GM12878 (cell line): ENCODE measurements at regions of chr2 and their contacts with region 1.

Region 1: GRCh38 chr2:177164584-177165052 is 48.0 kb upstream of the HNRNPA3 start:
- DNase-seq: peak; percentile 56
- ATAC-seq: peak; percentile 64
- H3K4me3 ChIP-seq: peak overlapping the region; percentile 63
- H3K27ac ChIP-seq: peak overlapping the region; percentile 97
- H3K4me1 ChIP-seq: peaks cover 16% of the 10 kb centered on the region
- H3K27me3 ChIP-seq: no peaks in the 10 kb centered on the region
- CTCF ChIP-seq: peak; percentile 100; a peak in 5 of 6 replicates
- EP300 ChIP-seq: no peak; a peak in 1 of 4 replicates
- POLR2A ChIP-seq: no peak
- RAD21 ChIP-seq: peak; percentile 99

Region 2: DNA sequence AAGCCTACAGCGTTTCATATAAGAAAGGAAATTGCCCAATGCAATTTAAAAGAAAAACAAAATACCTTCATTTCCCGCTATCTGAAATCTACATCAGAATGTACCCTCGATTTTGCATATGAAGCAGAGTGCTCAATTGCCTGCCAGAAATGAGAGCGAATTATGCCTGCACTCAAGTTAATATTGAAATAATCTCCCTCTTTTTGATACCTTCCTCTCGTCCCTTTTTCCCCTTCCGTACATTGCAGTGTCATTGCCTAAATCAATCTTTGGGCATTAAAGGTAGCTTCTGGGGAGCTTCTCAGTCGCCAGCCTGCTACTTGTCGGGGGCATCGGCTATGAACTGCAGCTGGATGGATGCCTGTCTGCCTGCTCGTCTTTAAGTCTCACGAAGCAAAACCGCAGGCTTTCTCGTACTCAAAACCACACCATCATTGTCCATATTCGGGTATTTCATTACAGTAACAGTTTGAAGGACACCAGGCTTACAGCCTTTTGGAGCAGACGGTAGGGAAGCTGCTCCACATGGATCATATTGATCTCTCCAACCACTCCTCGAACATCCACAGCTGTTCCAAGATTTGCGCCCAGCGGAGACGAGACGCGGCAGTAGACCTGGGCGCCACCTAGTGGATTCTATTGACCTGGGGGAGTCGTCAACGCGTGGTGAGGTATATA is 16.0 kb before region 1 on chr2:
- CTCF ChIA-PET with region 1: interaction called, 90 read pairs
- POLR2A ChIA-PET with region 1: no interaction called
- RAD21 ChIA-PET with region 1: interaction called, 27 read pairs
- SMC1A ChIA-PET with region 1: interaction called, 54 read pairs
- in situ Hi-C with region 1: no loop called
- intact Hi-C with region 1: no loop called
- DNase-seq: peak; percentile 45
- ATAC-seq: peak; percentile 95
- H3K4me3 ChIP-seq: peak overlapping the region; percentile 69
- H3K27ac ChIP-seq: no peak overlapping the region
- H3K4me1 ChIP-seq: no peaks in the 10 kb centered on the region
- H3K27me3 ChIP-seq: peaks cover 0 to 2% of the 10 kb centered on the region in 2 experiments; a peak in 1 of 4 replicates
- CTCF ChIP-seq: peak; percentile 87 to 93 (median 92)
- EP300 ChIP-seq: 0 out of 4 replicates have a peak, but pooled peaks of 1 of the 2 experiments have one; percentile 13
- POLR2A ChIP-seq: no peak
- RAD21 ChIP-seq: peak; percentile 67

Region 3: DNA sequence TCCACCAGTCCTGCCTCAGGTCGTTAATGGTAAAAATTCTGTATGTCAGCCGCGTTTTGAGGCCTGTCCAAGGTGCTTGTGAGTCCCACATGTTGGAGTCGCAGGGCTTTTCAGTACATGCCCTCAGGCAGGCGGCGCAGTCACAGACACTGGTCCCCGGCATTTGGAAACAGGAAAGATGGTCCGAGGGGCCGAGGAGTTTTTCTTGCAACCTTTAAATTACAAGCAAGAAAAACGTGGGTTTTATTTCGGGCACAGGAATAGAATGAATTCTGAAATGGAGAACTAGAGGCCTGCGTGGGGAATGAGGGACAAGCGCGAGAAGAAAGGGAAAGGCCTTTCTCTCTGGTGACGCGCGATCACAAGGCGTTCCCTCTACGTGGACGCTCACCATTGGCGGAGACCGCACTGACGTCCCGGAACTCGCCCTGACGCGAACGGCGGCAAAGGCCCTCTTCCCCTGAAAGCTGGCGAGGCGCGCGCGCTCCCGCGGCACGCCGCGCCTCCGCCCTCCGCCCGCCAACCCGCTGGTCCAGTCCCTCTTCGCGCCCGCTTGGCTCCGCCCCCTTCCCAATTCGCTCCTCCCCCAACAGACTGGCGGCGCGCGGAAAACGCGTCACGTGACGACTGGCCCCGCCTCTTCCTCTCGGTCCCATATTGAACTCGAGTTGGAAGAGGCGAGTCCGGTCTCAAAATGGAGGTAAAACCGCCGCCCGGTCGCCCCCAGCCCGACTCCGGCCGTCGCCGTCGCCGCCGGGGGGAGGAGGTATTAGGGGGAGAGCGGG is 47.7 kb after region 1 on chr2 and contains the start of gene HNRNPA3:
- CTCF ChIA-PET with region 1: interaction called, 24 read pairs
- POLR2A ChIA-PET with region 1: interaction called, 20 read pairs
- RAD21 ChIA-PET with region 1: interaction called, 31 read pairs
- SMC1A ChIA-PET with region 1: interaction called, 25 read pairs
- in situ Hi-C with region 1: loop called (anchors 5 kb)
- intact Hi-C with region 1: loop called (anchors 1 kb)
- DNase-seq: peak; percentile 95
- ATAC-seq: peak; percentile 88
- H3K4me3 ChIP-seq: peak within 1 kb of the TSS; percentile 95
- H3K27ac ChIP-seq: peak within 1 kb of the TSS; percentile 100
- H3K4me1 ChIP-seq: peaks cover 8% of the 10 kb centered on the region
- H3K27me3 ChIP-seq: no peaks in the 10 kb centered on the region
- CTCF ChIP-seq: peak in 2 of 3 experiments; percentile 16 to 20; a peak in 3 of 6 replicates
- EP300 ChIP-seq: peak in 1 of 2 experiments; percentile 43; a peak in 1 of 4 replicates
- POLR2A ChIP-seq: peak; percentile 46
- RAD21 ChIP-seq: no peak
- polyA plus RNA-seq, gene HNRNPA3: 221 to 285 TPM

Region 4: DNA sequence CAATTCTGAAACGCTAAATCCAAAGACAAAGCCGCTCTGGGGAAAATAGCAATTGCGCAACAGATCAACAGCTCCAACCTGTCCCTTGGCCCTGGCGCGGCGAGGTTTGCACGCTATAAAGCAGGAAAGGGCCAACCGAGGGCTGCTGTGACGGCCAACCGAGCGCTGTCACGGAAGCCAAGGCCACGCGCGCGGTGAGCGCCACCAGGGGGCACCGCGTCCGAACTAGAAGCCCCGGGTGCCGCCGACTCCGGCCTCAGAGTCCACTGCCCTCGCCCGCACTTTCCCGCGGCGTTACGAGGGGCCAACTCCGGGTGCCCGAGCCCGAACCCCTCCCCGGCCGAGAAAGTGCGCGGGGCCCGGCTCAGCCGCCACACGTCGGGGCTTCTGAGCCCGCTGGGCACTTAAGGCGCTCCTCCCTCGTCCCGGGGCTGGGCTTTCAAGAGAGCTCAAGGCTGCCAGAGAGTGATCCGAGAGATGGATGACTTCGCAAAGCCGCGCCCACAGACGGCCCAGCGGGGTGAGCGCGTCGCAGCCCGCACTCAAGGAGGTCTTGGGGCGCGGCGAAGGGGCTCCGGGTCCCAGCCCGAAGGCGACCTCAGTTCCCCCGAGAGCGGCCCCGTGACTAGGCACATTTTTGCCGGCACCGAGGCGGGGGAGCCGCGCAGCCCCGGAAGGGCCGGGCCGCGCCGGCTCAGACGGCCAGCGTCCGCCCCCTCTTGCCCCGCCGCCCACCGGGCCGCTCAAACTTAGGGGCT is 99.0 kb after region 1 on chr2:
- CTCF ChIA-PET with region 1: interaction called, 213 read pairs
- POLR2A ChIA-PET with region 1: interaction called, 74 read pairs
- RAD21 ChIA-PET with region 1: interaction called, 166 read pairs
- SMC1A ChIA-PET with region 1: interaction called, 140 read pairs
- in situ Hi-C with region 1: no loop called
- intact Hi-C with region 1: loop called (anchors 1 kb)
- DNase-seq: peak; percentile 71
- ATAC-seq: peak; percentile 74
- H3K4me3 ChIP-seq: peak overlapping the region; percentile 72
- H3K27ac ChIP-seq: peak overlapping the region; percentile 99
- H3K4me1 ChIP-seq: peaks cover 12% of the 10 kb centered on the region
- H3K27me3 ChIP-seq: no peaks in the 10 kb centered on the region
- CTCF ChIP-seq: peak; percentile 85 to 96 (median 86); a peak in 5 of 6 replicates
- EP300 ChIP-seq: peak; percentile 90 to 93
- POLR2A ChIP-seq: peak; percentile 81
- RAD21 ChIP-seq: peak; percentile 62

Region 5: GRCh38 chr2:177306550-177306949 is 141.9 kb after region 1 on chr2:
- CTCF ChIA-PET with region 1: interaction called, 29 read pairs
- POLR2A ChIA-PET with region 1: no interaction called
- RAD21 ChIA-PET with region 1: interaction called, 4 read pairs
- SMC1A ChIA-PET with region 1: interaction called, 24 read pairs
- in situ Hi-C with region 1: no loop called
- intact Hi-C with region 1: no loop called
- DNase-seq: no peak
- ATAC-seq: no peak
- H3K4me3 ChIP-seq: no peak overlapping the region
- H3K27ac ChIP-seq: no peak overlapping the region
- H3K4me1 ChIP-seq: no peaks in the 10 kb centered on the region
- H3K27me3 ChIP-seq: no peaks in the 10 kb centered on the region
- CTCF ChIP-seq: no peak
- EP300 ChIP-seq: no peak
- POLR2A ChIP-seq: no peak
- RAD21 ChIP-seq: no peak

Region 6: GRCh38 chr2:177348733-177349693 is 184.4 kb after region 1 on chr2:
- CTCF ChIA-PET with region 1: interaction called, 4 read pairs
- POLR2A ChIA-PET with region 1: no interaction called
- RAD21 ChIA-PET with region 1: interaction called, 3 read pairs
- SMC1A ChIA-PET with region 1: interaction called, 11 read pairs
- in situ Hi-C with region 1: no loop called
- intact Hi-C with region 1: no loop called
- DNase-seq: no peak
- ATAC-seq: peak; percentile 41
- H3K4me3 ChIP-seq: no peak overlapping the region
- H3K27ac ChIP-seq: no peak overlapping the region
- H3K4me1 ChIP-seq: peaks cover 9% of the 10 kb centered on the region
- H3K27me3 ChIP-seq: no peaks in the 10 kb centered on the region
- CTCF ChIP-seq: no peak
- EP300 ChIP-seq: no peak
- POLR2A ChIP-seq: no peak
- RAD21 ChIP-seq: no peak

Region 7: DNA sequence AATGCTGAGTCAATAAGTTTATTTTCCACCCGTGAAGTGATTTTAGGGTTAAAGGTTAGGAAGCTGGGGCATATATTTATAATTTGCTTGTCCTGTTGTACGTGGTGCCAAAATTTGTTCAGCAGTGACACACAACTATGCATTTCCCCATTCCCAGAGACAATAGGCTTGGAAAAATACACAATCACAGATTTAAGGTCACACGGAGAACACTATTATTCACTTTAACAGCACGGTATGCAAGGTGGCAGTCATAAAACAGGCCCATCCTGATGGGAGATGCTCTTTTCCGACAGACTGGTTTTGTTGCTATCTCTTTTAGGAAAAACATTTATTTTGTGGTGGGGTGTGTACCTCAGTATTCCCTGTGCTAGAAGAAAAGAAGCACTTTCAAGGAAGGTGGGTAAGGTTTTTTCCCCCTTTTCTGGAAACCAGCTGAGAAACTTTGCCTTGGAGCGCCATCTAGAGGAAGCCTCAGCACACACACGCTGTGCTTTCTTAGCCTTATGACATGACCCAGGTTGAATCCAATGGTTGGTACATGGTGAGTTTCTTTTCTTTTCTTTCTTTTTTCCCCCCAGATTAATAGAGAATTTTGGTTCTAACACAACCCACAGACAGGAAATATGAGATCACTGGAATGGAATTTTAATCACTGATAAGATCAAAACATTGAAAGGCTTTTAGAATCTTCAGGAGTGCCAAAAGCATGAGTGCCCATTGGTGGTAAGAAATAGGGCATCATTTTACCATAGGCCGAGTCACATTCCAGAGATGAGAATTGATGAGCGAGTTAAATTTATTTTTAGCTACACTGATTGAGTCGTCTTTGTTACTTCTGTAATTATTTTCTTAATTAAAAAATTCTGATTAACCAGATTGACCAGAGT is 560.0 kb after region 1 on chr2:
- CTCF ChIA-PET with region 1: interaction called, 42 read pairs
- POLR2A ChIA-PET with region 1: no interaction called
- RAD21 ChIA-PET with region 1: interaction called, 28 read pairs
- SMC1A ChIA-PET with region 1: interaction called, 30 read pairs
- in situ Hi-C with region 1: loop called (anchors 10 kb)
- intact Hi-C with region 1: loop called (anchors 5 kb)
- DNase-seq: no peak
- ATAC-seq: peak; percentile 92
- H3K4me3 ChIP-seq: no peak overlapping the region
- H3K27ac ChIP-seq: no peak overlapping the region
- H3K4me1 ChIP-seq: no peaks in the 10 kb centered on the region
- H3K27me3 ChIP-seq: no peaks in the 10 kb centered on the region; a peak in 1 of 4 replicates
- CTCF ChIP-seq: peak; percentile 85 to 93 (median 90)
- EP300 ChIP-seq: no peak
- POLR2A ChIP-seq: no peak
- RAD21 ChIP-seq: peak; percentile 94